Activated CD4-positive, alpha-beta T cell treated with anti-CD3 and anti-CD28 coated beads for 36 hours (primary cell): ENCODE measurements at regions of chr11 and their contacts with region 1.

Region 1: GRCh38 chr11:47715082-47715669 is at the start of gene AGBL2:
- DNase-seq: peak; percentile 92
- ATAC-seq: peak; percentile 98
- H3K4me3 Mint-ChIP-seq: peak within 1 kb of the TSS; percentile 91
- H3K27ac Mint-ChIP-seq: peak within 1 kb of the TSS; percentile 96
- H3K4me1 Mint-ChIP-seq: peaks cover 22% of the 10 kb centered on the region
- H3K27me3 Mint-ChIP-seq: no peaks in the 10 kb centered on the region
- total RNA-seq, gene AGBL2: 3.5 to 5.6 TPM

Region 2: GRCh38 chr11:46332568-46333393 is 1382.4 kb before region 1 on chr11:
- CTCF ChIA-PET with region 1: no interaction called
- POLR2A ChIA-PET with region 1: no interaction called
- intact Hi-C with region 1: loop called in 1 of 2 experiments (anchors 5 kb)
- DNase-seq: peak; percentile 75
- ATAC-seq: peak; percentile 18
- H3K4me3 Mint-ChIP-seq: peak overlapping the region; percentile 71
- H3K27ac Mint-ChIP-seq: peak overlapping the region; percentile 3
- H3K4me1 Mint-ChIP-seq: peaks cover 72% of the 10 kb centered on the region
- H3K27me3 Mint-ChIP-seq: no peaks in the 10 kb centered on the region

Region 3: DNA sequence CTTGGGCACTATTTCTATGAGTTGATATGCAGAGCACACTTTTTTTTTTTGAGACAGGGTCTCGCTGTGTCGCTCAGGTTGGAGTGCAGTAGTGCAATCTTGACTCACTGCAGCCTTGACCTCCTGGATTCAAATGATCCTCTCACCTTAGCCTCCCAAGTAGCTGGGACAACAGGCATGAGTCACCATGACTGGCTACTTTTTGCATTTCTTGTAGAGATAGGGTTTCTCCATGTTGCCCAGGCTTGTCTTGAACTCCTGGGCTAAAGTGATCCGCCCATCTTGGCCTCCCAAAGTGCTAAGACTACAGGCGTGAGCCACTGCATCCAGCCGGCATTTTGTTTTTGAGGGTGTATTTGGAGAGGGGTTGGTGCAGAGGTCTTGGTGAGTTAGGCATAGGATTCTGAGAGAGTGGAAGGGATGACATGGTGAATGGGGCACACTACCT is 42.9 kb before region 1 on chr11:
- CTCF ChIA-PET with region 1: no interaction called
- POLR2A ChIA-PET with region 1: no interaction called
- intact Hi-C with region 1: no loop called
- DNase-seq: no peak
- ATAC-seq: no peak
- H3K4me3 Mint-ChIP-seq: no peak overlapping the region
- H3K27ac Mint-ChIP-seq: no peak overlapping the region
- H3K4me1 Mint-ChIP-seq: peaks cover 4% of the 10 kb centered on the region
- H3K27me3 Mint-ChIP-seq: no peaks in the 10 kb centered on the region